ENCODE measurements at regions of chr19 and their contacts with region 1.

Region 1: GRCh38 chr19:5031231-5032100 is 62.6 kb downstream of the KDM4B start:
- DNase-seq: peak; percentile 70 to 99
- H3K4me3 ChIP-seq: no peak overlapping the region
- H3K27ac ChIP-seq: no peak overlapping the region
- H3K4me1 ChIP-seq: peaks cover 0 to 4% (median 0%) of the 10 kb centered on the region in 4 experiments; a peak in 1 of 7 replicates
- H3K27me3 ChIP-seq: no peaks in the 10 kb centered on the region
- CTCF ChIP-seq: peak; percentile 94 to 98 (median 97)
- EP300 ChIP-seq: no peak
- POLR2A ChIP-seq: no peak
- RAD21 ChIP-seq: peak; percentile 97 to 98

Region 2: GRCh38 chr19:4844348-4845179 is 186.9 kb before region 1 on chr19:
- CTCF ChIA-PET with region 1: interaction called, 10 read pairs
- POLR2A ChIA-PET with region 1: no interaction called
- DNase-seq: no peak
- H3K4me3 ChIP-seq: no peak overlapping the region
- H3K27ac ChIP-seq: no peak overlapping the region
- H3K4me1 ChIP-seq: no peaks in the 10 kb centered on the region
- H3K27me3 ChIP-seq: no peaks in the 10 kb centered on the region
- CTCF ChIP-seq: no peak
- EP300 ChIP-seq: no peak
- POLR2A ChIP-seq: no peak
- RAD21 ChIP-seq: no peak

Region 3: GRCh38 chr19:4933528-4933927 is 97.9 kb before region 1 on chr19:
- CTCF ChIA-PET with region 1: interaction called, 67 read pairs
- POLR2A ChIA-PET with region 1: no interaction called
- DNase-seq: no peak
- H3K4me3 ChIP-seq: no peak overlapping the region
- H3K27ac ChIP-seq: no peak overlapping the region
- H3K4me1 ChIP-seq: peaks cover 0 to under 1% (median 0%) of the 10 kb centered on the region in 4 experiments; a peak in 2 of 7 replicates
- H3K27me3 ChIP-seq: no peaks in the 10 kb centered on the region
- CTCF ChIP-seq: no peak
- EP300 ChIP-seq: no peak
- POLR2A ChIP-seq: no peak
- RAD21 ChIP-seq: no peak

Region 4: DNA sequence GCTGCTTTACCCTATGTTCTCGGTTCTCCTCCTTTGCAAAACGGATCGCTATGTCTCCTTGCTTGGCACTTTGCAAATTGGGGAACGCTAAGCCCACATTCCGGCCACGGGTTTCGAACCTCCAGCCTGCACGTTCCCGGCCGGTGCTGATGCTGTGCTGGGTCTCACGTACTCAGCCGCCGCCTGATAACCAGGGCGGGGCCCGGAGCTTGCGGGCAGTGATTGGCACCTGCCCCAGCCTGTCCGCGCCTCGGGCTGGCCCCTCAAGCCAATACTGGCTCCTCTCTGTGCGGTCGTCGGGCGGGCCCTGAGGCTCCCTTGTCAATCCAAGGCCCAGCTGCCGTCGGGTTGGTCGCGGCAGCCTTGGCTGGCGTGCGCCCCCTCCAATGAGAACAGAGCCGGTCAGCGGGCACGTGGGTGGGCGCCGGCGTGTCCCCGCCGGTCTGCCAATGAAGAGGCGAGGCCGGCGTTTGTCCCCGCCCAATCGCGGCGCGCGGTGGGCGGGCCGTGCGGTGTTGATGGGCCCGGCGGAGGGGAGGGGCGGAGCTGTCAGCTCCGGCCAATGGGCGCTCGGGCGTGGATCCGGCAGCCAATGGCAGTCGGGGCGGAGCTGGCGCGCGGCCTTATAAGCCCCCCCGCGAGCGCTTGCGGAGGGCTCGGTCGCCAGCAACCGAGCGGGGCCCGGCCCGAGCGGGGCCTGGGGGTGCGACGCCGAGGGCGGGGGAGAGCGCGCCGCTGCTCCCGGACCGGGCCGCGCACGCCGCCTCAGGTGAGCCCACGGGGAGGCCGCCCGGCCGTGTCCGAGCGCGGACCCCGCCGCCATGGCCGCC is 62.8 kb before region 1 on chr19 and contains the start of gene KDM4B:
- CTCF ChIA-PET with region 1: interaction called, 38 read pairs
- POLR2A ChIA-PET with region 1: interaction called, 3 read pairs
- DNase-seq: peak; percentile 98 to 99
- H3K4me3 ChIP-seq: peak within 1 kb of the TSS; percentile 49 to 67 (median 57)
- H3K27ac ChIP-seq: no peak within 1 kb of the TSS
- H3K4me1 ChIP-seq: peaks cover 3 to 17% (median 14%) of the 10 kb centered on the region in 4 experiments
- H3K27me3 ChIP-seq: peaks cover 0 to 5% (median 0%) of the 10 kb centered on the region in 4 experiments; a peak in 2 of 7 replicates
- CTCF ChIP-seq: no peak
- EP300 ChIP-seq: 0 out of 3 replicates have a peak, but pooled peaks of 1 of the 2 experiments have one; percentile 15
- POLR2A ChIP-seq: peak in 1 of 2 experiments; percentile 85; a peak in 2 of 3 replicates
- RAD21 ChIP-seq: no peak
- total RNA-seq, gene KDM4B: 31.9 and 32.8 TPM in 2 replicates

Region 5: GRCh38 chr19:5001615-5002014 is 29.9 kb before region 1 on chr19:
- CTCF ChIA-PET with region 1: interaction called, 175 read pairs
- POLR2A ChIA-PET with region 1: no interaction called
- DNase-seq: no peak
- H3K4me3 ChIP-seq: no peak overlapping the region
- H3K27ac ChIP-seq: no peak overlapping the region
- H3K4me1 ChIP-seq: no peaks in the 10 kb centered on the region; a peak in 1 of 7 replicates
- H3K27me3 ChIP-seq: no peaks in the 10 kb centered on the region
- CTCF ChIP-seq: peak; percentile 76 to 94 (median 93)
- EP300 ChIP-seq: no peak
- POLR2A ChIP-seq: no peak
- RAD21 ChIP-seq: peak; percentile 57 to 67

Region 6: DNA sequence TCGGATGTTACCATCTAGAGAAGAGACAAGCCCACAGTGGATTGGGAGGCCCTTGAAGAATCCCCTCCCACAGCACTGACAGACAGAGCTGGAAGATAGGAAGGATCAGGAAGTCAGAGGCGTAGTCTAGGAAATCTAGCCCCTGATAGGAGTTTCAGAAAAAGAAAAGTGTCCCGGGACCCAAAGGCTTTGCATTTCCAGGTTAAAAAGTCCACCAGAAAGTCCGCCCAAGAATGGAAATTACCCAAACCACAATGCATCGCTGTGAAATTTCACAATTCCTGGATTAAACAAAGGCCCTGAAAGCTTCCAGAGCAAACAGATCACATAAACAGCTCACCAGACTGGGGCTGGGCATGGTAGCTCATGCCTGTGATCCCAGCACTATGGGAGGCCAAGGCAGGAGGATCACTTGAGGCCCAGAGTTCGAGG is 84.3 kb after region 1 on chr19:
- CTCF ChIA-PET with region 1: no interaction called
- POLR2A ChIA-PET with region 1: no interaction called
- DNase-seq: no peak
- H3K4me3 ChIP-seq: no peak overlapping the region
- H3K27ac ChIP-seq: no peak overlapping the region
- H3K4me1 ChIP-seq: peaks cover 0 to 36% (median 23%) of the 10 kb centered on the region in 4 experiments; a peak in 6 of 7 replicates
- H3K27me3 ChIP-seq: no peaks in the 10 kb centered on the region
- CTCF ChIP-seq: no peak
- EP300 ChIP-seq: no peak
- POLR2A ChIP-seq: no peak
- RAD21 ChIP-seq: no peak

Region 7: GRCh38 chr19:5216141-5216847 is 184.8 kb after region 1 on chr19:
- CTCF ChIA-PET with region 1: no interaction called
- POLR2A ChIA-PET with region 1: no interaction called
- DNase-seq: no peak
- H3K4me3 ChIP-seq: no peak overlapping the region
- H3K27ac ChIP-seq: no peak overlapping the region
- H3K4me1 ChIP-seq: no peaks in the 10 kb centered on the region
- H3K27me3 ChIP-seq: no peaks in the 10 kb centered on the region
- CTCF ChIP-seq: no peak
- EP300 ChIP-seq: no peak
- POLR2A ChIP-seq: no peak
- RAD21 ChIP-seq: no peak

Region 8: DNA sequence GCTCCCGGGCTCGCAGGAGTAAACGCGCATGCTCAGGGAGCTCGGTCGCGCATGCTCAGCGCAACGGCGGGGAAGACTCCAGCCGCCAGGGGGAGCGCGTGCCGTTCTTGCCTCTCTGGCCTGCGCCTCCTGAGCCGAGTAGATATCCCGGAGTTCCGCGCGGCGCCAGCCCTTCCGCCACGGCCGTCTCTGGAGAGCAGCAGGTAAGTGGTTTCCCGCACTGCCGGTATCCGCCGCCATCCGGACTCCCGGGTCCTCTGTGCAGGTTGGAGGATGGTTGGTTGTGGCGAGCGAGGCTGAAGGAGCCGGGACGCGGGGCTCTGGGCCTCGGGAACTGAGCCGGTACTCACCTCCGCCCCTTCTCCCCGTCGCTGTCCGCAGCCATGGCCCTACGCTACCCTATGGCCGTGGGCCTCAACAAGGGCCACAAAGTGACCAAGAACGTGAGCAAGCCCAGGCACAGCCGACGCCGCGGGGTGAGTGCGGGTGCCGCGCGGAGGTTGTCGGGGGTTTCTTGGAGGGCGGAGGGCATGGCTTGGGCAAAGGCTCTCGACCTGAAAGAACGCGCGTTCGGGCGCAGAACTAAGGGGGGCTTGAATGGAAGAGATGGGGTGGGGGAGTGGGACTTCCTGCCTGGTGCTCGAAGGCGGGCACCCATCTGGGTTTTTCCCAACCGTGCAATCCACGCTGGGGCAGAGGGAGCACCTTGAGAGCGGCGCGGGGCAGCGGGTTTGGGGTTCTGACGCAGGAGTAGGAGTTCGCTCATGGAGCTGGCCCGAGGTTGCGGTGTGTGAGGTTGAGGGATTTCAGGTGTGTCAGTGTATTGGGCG is 658.9 kb after region 1 on chr19 and contains the start of gene RPL36:
- CTCF ChIA-PET with region 1: no interaction called
- POLR2A ChIA-PET with region 1: no interaction called
- DNase-seq: peak; percentile 90 to 100
- H3K4me3 ChIP-seq: peak within 1 kb of the TSS; percentile 64 to 99 (median 83)
- H3K27ac ChIP-seq: peak within 1 kb of the TSS; percentile 89
- H3K4me1 ChIP-seq: peaks cover 0 to 4% (median 1%) of the 10 kb centered on the region in 4 experiments; a peak in 3 of 7 replicates
- H3K27me3 ChIP-seq: no peaks in the 10 kb centered on the region
- CTCF ChIP-seq: peak; percentile 93 to 100 (median 99)
- EP300 ChIP-seq: no peak; a peak in 1 of 3 replicates
- POLR2A ChIP-seq: peak; percentile 97 to 99
- RAD21 ChIP-seq: peak; percentile 27 to 33; a peak in 3 of 4 replicates
- total RNA-seq, gene RPL36: 1,075 and 1,137 TPM in 2 replicates